Calu3 (cell line): ENCODE measurements at regions of chr1 and their contacts with region 1.

Region 1: DNA sequence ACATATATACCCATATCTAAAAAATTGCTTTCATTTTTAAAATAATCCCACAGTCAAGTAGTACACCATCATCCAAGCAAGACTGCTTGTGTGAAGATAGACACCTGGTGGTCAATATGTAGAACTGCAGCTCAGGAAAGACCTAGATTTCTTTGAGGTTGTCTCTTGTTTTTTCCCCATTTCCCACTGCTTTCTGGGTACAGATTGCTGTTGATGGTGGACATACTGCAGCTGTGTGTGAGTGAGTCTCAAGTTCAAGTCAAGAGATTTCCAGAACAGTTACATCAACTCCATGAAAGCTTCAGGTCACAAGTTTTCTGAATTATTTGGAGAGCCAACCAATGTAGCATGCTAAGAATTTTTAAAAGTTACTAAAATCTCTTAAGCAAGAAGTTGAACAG is 306.4 kb downstream of the DUSP10 start:
- DNase-seq: no peak
- H3K4me3 Mint-ChIP-seq: no peak overlapping the region
- H3K27ac Mint-ChIP-seq: no peak overlapping the region
- H3K4me1 Mint-ChIP-seq: peaks cover 20% of the 10 kb centered on the region
- H3K27me3 Mint-ChIP-seq: no peaks in the 10 kb centered on the region
- CTCF ChIP-seq: peak; percentile 89

Region 2: GRCh38 chr1:220873868-220874655 is 561.4 kb before region 1 on chr1:
- CTCF ChIA-PET with region 1: interaction called, 3 read pairs
- intact Hi-C with region 1: loop called (anchors 1 kb)
- DNase-seq: peak; percentile 56
- H3K4me3 Mint-ChIP-seq: no peak overlapping the region
- H3K27ac Mint-ChIP-seq: no peak overlapping the region
- H3K4me1 Mint-ChIP-seq: peaks cover 15% of the 10 kb centered on the region
- H3K27me3 Mint-ChIP-seq: no peaks in the 10 kb centered on the region
- CTCF ChIP-seq: peak; percentile 74

Region 3: DNA sequence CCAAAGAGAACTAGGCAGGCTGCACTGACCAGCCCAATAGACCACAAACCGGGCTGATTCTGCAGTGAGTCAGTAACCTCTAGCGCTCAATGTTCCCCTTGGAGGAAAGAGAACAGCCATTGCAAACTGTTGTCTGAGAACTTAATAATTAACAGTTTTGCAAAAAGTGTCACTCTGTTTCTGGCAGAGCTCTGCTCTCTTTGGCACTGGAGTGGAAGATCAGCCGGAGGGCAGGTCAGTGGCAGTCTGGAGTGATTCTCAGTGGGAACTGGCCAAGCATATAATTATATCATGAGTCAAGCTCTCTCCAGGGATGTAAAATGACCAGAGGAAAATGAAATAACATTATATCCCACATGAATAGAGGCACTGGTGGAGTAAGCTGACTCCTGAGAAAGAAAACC is 318.0 kb before region 1 on chr1:
- CTCF ChIA-PET with region 1: no interaction called
- intact Hi-C with region 1: loop called (anchors 10 kb)
- DNase-seq: peak; percentile 66
- H3K4me3 Mint-ChIP-seq: peak overlapping the region; percentile 10
- H3K27ac Mint-ChIP-seq: peak overlapping the region; percentile 78
- H3K4me1 Mint-ChIP-seq: peaks cover 34% of the 10 kb centered on the region
- H3K27me3 Mint-ChIP-seq: no peaks in the 10 kb centered on the region
- CTCF ChIP-seq: no peak

Region 4: GRCh38 chr1:221230605-221231004 is 204.9 kb before region 1 on chr1:
- CTCF ChIA-PET with region 1: no interaction called
- intact Hi-C with region 1: loop called (anchors 10 kb)
- DNase-seq: peak; percentile 7
- H3K4me3 Mint-ChIP-seq: no peak overlapping the region
- H3K27ac Mint-ChIP-seq: no peak overlapping the region
- H3K4me1 Mint-ChIP-seq: peaks cover 8% of the 10 kb centered on the region
- H3K27me3 Mint-ChIP-seq: no peaks in the 10 kb centered on the region
- CTCF ChIP-seq: no peak

Region 5: GRCh38 chr1:221344693-221345092 is 90.8 kb before region 1 on chr1:
- CTCF ChIA-PET with region 1: no interaction called
- intact Hi-C with region 1: no loop called
- DNase-seq: no peak
- H3K4me3 Mint-ChIP-seq: no peak overlapping the region
- H3K27ac Mint-ChIP-seq: no peak overlapping the region
- H3K4me1 Mint-ChIP-seq: no peaks in the 10 kb centered on the region
- H3K27me3 Mint-ChIP-seq: no peaks in the 10 kb centered on the region
- CTCF ChIP-seq: no peak

Region 6: GRCh38 chr1:221356693-221357092 is 78.8 kb before region 1 on chr1:
- CTCF ChIA-PET with region 1: no interaction called
- intact Hi-C with region 1: loop called (anchors 5 kb)
- DNase-seq: no peak
- H3K4me3 Mint-ChIP-seq: no peak overlapping the region
- H3K27ac Mint-ChIP-seq: no peak overlapping the region
- H3K4me1 Mint-ChIP-seq: no peaks in the 10 kb centered on the region
- H3K27me3 Mint-ChIP-seq: no peaks in the 10 kb centered on the region
- CTCF ChIP-seq: no peak

Region 7: DNA sequence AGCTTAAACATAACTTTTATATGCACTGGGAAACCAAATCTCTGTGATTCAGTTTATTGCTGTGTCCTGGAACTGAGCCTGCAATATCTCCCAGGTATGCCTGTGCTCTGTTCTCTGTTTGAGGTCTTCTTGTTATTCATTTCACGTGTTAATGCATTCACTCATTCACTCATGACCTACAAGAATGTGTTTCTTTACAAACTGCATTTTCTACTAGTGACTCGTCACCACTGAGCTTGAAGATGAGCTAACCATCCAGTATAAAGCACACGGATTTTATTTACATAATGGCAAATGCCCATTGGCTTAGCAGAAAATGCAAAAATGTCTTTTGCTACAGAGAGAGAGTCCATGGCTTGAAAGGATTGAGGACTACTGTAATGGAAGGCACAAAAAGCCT is 381.4 kb after region 1 on chr1:
- CTCF ChIA-PET with region 1: no interaction called
- intact Hi-C with region 1: no loop called
- DNase-seq: no peak
- H3K4me3 Mint-ChIP-seq: no peak overlapping the region
- H3K27ac Mint-ChIP-seq: no peak overlapping the region
- H3K4me1 Mint-ChIP-seq: peaks cover 36% of the 10 kb centered on the region
- H3K27me3 Mint-ChIP-seq: no peaks in the 10 kb centered on the region
- CTCF ChIP-seq: no peak